ENCODE measurements at regions of chr1 and their contacts with region 1.

Region 1: DNA sequence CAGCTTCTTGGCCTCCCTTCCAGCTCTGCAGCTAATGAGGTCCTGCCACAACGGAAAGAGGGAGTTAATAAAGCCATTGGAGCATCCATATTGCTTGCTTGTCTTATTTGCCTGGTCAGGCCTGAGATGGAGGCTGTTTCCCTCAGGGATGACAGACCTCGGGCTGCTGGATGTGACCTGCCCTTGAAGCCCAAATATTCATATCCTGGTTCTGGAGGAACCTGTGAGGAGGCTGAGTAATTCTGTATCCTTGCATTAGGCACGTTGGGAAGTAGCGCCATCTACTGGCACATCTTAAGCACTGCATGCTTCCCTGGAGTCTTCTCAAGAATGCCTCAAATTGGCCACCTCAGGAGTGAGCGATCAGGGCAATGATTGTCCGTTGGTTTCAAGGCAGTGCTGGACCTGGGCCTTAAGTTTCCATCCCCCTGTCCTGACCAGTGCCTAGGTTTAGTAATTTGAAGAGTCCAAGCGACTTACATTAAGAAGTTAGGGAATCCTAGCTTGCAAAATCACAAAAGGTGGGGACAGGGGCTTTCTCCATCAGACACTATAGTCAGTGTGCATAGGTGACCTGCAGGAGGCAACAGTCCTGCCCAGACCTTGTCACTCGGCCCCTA is 13.8 kb upstream of the NASP start:
- DNase-seq: peak; percentile 81
- H3K4me3 ChIP-seq: no peak overlapping the region
- H3K27ac ChIP-seq: no peak overlapping the region
- H3K4me1 ChIP-seq: no peaks in the 10 kb centered on the region
- H3K27me3 ChIP-seq: no peaks in the 10 kb centered on the region
- CTCF ChIP-seq: peak; percentile 89 to 95
- POLR2A ChIP-seq: no peak

Region 2: GRCh38 chr1:45359882-45360513 is 210.1 kb before region 1 on chr1:
- CTCF ChIA-PET with region 1: interaction called, 35 read pairs
- POLR2A ChIA-PET with region 1: no interaction called
- dilution Hi-C with region 1: no loop called
- intact Hi-C with region 1: loop called (anchors 1 kb)
- DNase-seq: peak; percentile 74
- H3K4me3 ChIP-seq: no peak overlapping the region
- H3K27ac ChIP-seq: no peak overlapping the region
- H3K4me1 ChIP-seq: peaks cover 7% of the 10 kb centered on the region
- H3K27me3 ChIP-seq: no peaks in the 10 kb centered on the region
- CTCF ChIP-seq: peak; percentile 47 to 64
- POLR2A ChIP-seq: no peak

Region 3: DNA sequence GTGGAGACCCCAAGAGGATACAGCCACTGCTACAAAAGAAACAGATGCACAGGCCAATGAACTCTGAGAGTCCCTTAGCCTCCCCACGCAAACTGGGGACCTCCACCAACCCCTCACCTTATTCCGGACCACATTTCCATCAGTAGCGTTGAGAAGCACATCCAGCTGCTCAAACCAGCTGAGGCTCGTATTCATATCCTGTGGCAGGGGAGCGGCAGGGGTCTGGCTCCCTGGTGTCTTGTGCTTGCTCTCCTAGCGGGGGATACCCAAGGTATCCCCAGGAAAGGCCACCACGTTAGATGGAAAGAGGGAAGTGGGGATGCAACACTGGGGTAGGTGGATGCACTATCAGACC is 70.7 kb before region 1 on chr1:
- CTCF ChIA-PET with region 1: interaction called, 10 read pairs
- POLR2A ChIA-PET with region 1: no interaction called
- dilution Hi-C with region 1: no loop called
- intact Hi-C with region 1: no loop called
- DNase-seq: peak; percentile 12
- H3K4me3 ChIP-seq: peak overlapping the region; percentile 23 to 80 (median 54)
- H3K27ac ChIP-seq: no peak overlapping the region
- H3K4me1 ChIP-seq: peaks cover 11% of the 10 kb centered on the region
- H3K27me3 ChIP-seq: no peaks in the 10 kb centered on the region
- CTCF ChIP-seq: no peak
- POLR2A ChIP-seq: no peak

Region 4: GRCh38 chr1:45512641-45513054 is 57.4 kb before region 1 on chr1:
- CTCF ChIA-PET with region 1: interaction called, 148 read pairs
- POLR2A ChIA-PET with region 1: no interaction called
- dilution Hi-C with region 1: no loop called
- intact Hi-C with region 1: loop called (anchors 1 kb)
- DNase-seq: peak; percentile 74
- H3K4me3 ChIP-seq: no peak overlapping the region
- H3K27ac ChIP-seq: no peak overlapping the region
- H3K4me1 ChIP-seq: no peaks in the 10 kb centered on the region
- H3K27me3 ChIP-seq: no peaks in the 10 kb centered on the region
- CTCF ChIP-seq: peak; percentile 66 to 81
- POLR2A ChIP-seq: no peak

Region 5: DNA sequence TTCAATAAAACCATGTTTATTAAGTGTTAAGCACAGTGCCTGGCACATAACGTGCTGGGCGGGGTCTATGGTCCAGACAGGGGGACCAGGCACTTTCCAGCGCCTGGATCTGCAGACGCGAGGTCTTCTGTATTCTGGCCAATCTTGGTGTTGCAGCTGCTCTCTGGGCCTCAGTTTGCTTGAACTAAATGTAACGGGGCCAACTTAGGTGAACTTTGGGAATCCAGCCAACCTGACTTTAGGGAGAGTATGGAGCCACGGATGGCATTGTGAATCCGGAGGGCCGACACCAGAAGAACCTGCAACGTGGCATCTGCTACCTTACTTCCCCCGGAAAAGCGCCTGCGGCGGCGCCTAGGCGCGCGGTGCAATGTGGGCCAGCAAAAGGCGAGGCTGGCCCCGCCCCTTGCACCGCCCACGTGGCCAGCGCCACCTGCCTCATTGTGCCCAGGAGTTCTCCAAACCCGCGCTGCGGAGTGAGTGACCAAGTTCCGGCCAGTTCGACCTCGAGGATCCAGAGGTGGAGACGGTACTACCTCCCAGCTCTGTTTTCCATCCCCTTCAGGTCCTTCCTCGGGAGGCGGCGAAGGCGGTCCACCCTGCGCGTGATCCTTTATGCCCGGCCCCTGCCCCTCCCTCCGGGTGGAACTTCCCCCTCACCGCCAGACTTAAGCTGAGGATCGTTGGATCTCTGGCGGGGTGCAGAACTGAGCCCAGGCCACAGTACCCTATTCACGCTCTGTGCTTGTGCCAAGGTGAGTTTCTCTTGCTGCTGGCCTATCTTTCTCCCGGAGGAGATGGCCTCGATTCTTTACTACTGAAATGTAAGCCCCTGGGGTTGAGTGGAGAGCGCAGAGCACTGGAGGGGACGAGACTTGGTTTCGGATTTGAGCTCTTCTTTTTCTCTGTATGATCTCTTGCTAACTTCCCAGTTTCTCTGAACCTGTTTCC is 19.4 kb before region 1 on chr1 and contains the start of gene AKR1A1:
- CTCF ChIA-PET with region 1: interaction called, 18 read pairs
- POLR2A ChIA-PET with region 1: no interaction called
- dilution Hi-C with region 1: no loop called
- intact Hi-C with region 1: no loop called
- DNase-seq: peak; percentile 90
- H3K4me3 ChIP-seq: peak within 1 kb of the TSS; percentile 57 to 93 (median 80)
- H3K27ac ChIP-seq: peak within 1 kb of the TSS; percentile 49
- H3K4me1 ChIP-seq: peaks cover 13% of the 10 kb centered on the region
- H3K27me3 ChIP-seq: no peaks in the 10 kb centered on the region
- CTCF ChIP-seq: no peak
- POLR2A ChIP-seq: peak; percentile 96
- total RNA-seq, gene AKR1A1: 166 and 172 TPM in 2 replicates

Region 6: GRCh38 chr1:45557422-45557944 is 12.6 kb before region 1 on chr1:
- CTCF ChIA-PET with region 1: interaction called, 23 read pairs
- POLR2A ChIA-PET with region 1: no interaction called
- dilution Hi-C with region 1: no loop called
- intact Hi-C with region 1: no loop called
- DNase-seq: no peak
- H3K4me3 ChIP-seq: no peak overlapping the region
- H3K27ac ChIP-seq: no peak overlapping the region
- H3K4me1 ChIP-seq: no peaks in the 10 kb centered on the region
- H3K27me3 ChIP-seq: no peaks in the 10 kb centered on the region
- CTCF ChIP-seq: no peak
- POLR2A ChIP-seq: no peak

Region 7: DNA sequence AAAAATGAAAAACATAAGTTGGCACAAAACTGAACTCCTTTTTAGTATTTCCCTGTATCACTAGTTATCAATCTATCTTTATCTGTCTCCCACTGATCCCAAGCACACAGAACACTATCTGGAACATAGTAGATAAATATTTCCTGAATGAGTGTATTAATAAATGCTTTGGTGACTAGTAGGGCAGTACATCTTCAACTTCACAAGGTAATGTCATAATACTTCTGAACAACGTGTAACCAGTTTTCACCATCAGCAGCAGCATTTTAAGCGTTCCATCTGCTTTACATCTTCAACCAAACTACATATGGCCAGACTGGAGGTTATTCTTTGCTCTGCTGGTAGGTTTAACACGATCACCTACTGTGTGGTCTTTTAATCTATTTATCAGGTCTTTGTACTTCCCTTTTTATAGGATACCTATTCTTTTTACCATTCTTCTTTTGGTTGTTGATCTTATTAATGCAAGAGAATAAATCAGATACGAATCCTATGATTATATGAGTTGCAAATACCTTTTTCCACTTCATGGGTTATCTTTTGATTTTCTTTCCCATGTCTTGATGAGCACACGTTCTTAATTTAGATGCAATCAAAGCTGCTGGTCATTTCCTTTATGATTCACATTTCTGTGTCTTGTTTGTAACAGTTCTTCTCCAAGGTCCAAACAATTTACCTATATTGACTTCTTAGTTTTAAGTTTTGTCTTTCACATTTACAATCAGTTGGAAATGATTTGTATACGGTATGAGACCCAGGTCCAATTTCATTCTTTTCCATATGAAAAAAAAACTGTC is 100.0 kb after region 1 on chr1:
- CTCF ChIA-PET with region 1: no interaction called
- POLR2A ChIA-PET with region 1: no interaction called
- dilution Hi-C with region 1: no loop called
- intact Hi-C with region 1: no loop called
- DNase-seq: peak; percentile 29
- H3K4me3 ChIP-seq: no peak overlapping the region
- H3K27ac ChIP-seq: peak overlapping the region; percentile 16
- H3K4me1 ChIP-seq: peaks cover 9% of the 10 kb centered on the region
- H3K27me3 ChIP-seq: no peaks in the 10 kb centered on the region
- CTCF ChIP-seq: no peak
- POLR2A ChIP-seq: no peak

Measured in endothelial cell of umbilical vein (primary cell).